ENCODE measurements at regions of chr1 and their contacts with region 1.

Region 1: GRCh38 chr1:30801771-30802198 is 44.2 kb upstream of the LAPTM5 start:
- DNase-seq: peak; percentile 90
- ATAC-seq: peak; percentile 77
- H3K4me3 Mint-ChIP-seq: no peak overlapping the region
- H3K27ac Mint-ChIP-seq: no peak overlapping the region
- H3K4me1 Mint-ChIP-seq: no peaks in the 10 kb centered on the region
- H3K27me3 Mint-ChIP-seq: peaks cover 22% of the 10 kb centered on the region

Region 2: DNA sequence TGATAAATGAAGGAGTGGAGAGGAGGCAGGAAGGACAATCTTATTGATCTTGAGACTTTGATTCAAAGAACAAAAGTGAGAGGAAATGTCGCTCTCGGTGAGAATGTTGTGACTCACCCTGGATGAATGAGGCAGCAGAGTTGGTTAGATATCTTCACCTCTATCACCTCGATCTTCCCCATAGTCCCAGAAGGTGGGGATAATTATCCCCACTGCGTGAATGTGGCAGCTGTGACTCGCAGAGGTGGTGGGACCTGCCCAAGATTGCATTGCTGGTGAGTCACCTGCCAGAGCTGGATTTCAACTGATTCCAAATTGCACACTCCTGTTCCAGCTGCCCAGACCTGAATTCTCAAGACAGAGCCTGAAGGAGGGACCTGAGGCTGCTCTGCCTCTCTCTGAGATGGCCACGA is 183.4 kb before region 1 on chr1:
- CTCF ChIA-PET with region 1: no interaction called
- POLR2A ChIA-PET with region 1: no interaction called
- intact Hi-C with region 1: no loop called
- DNase-seq: peak; percentile 11
- ATAC-seq: peak; percentile 69
- H3K4me3 Mint-ChIP-seq: no peak overlapping the region
- H3K27ac Mint-ChIP-seq: no peak overlapping the region
- H3K4me1 Mint-ChIP-seq: peaks cover 8% of the 10 kb centered on the region
- H3K27me3 Mint-ChIP-seq: peaks cover 24% of the 10 kb centered on the region

Region 3: GRCh38 chr1:30790850-30791778 is 10.7 kb before region 1 on chr1:
- CTCF ChIA-PET with region 1: interaction called, 41 read pairs
- POLR2A ChIA-PET with region 1: no interaction called
- intact Hi-C with region 1: no loop called
- DNase-seq: peak; percentile 26
- ATAC-seq: peak; percentile 64
- H3K4me3 Mint-ChIP-seq: no peak overlapping the region
- H3K27ac Mint-ChIP-seq: no peak overlapping the region
- H3K4me1 Mint-ChIP-seq: peaks cover 12% of the 10 kb centered on the region
- H3K27me3 Mint-ChIP-seq: peaks cover 6% of the 10 kb centered on the region

Region 4: DNA sequence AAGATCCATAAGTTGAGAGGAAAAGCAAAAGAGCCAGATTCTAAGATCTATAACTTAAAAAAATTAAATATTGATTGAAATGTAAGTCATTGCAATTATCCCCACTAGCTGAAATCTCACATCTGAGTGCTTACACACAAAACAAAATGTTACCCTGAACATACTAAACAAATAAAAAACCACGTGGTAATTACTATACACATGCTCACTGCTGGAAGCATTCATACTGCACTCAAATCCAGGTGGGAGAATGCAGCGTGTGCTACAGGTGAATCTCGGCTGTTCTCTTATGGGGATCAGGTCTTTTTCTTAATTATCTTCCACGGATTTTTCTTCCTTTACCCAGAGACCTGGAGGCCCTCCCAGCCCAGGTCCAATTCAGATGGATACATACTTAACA is 32.5 kb after region 1 on chr1:
- CTCF ChIA-PET with region 1: interaction called, 11 read pairs
- POLR2A ChIA-PET with region 1: no interaction called
- intact Hi-C with region 1: no loop called
- DNase-seq: no peak
- ATAC-seq: no peak
- H3K4me3 Mint-ChIP-seq: no peak overlapping the region
- H3K27ac Mint-ChIP-seq: no peak overlapping the region
- H3K4me1 Mint-ChIP-seq: no peaks in the 10 kb centered on the region
- H3K27me3 Mint-ChIP-seq: peaks cover 12% of the 10 kb centered on the region

Region 5: DNA sequence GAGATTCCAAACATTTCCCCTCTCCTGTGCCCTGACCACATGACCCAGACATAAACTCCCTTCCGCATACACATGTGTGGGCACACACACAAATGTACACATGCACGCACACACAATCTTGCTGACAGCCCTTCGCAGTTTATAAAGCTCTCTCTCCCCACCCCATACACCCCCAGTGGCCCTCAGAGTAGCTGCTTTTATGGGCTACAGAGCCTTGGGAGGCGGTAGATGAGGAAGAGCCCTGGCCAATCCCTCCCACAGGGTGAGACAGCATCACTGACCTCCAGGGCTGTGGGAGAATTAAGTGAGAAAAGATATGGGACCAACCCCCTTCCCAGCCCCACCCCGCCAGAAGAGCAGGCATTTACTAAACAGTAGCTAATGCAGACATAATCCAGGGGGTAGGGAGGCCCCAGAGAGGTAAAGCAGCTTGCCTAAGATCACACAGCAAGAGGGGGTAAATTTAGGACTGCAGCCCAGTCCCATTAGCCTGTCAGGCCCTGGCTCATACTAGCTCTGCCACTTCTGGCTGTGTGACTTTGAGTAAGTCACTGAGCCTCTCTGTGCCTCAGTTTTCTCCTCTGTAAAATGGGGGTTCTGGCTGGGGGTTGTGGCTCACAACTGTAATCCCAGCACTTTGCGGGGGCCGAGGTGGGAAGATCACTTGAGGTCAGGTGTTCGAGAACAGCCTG is 101.7 kb after region 1 on chr1:
- CTCF ChIA-PET with region 1: interaction called, 145 read pairs
- POLR2A ChIA-PET with region 1: no interaction called
- intact Hi-C with region 1: no loop called
- DNase-seq: no peak
- ATAC-seq: no peak
- H3K4me3 Mint-ChIP-seq: no peak overlapping the region
- H3K27ac Mint-ChIP-seq: no peak overlapping the region
- H3K4me1 Mint-ChIP-seq: peaks cover 6% of the 10 kb centered on the region
- H3K27me3 Mint-ChIP-seq: peaks cover 18% of the 10 kb centered on the region

Region 6: GRCh38 chr1:30911046-30911954 is 109.5 kb after region 1 on chr1:
- CTCF ChIA-PET with region 1: interaction called, 145 read pairs
- POLR2A ChIA-PET with region 1: no interaction called
- intact Hi-C with region 1: loop called (anchors 1 kb)
- DNase-seq: peak; percentile 82
- ATAC-seq: peak; percentile 74
- H3K4me3 Mint-ChIP-seq: no peak overlapping the region
- H3K27ac Mint-ChIP-seq: no peak overlapping the region
- H3K4me1 Mint-ChIP-seq: peaks cover 13% of the 10 kb centered on the region
- H3K27me3 Mint-ChIP-seq: peaks cover 20% of the 10 kb centered on the region

Region 7: DNA sequence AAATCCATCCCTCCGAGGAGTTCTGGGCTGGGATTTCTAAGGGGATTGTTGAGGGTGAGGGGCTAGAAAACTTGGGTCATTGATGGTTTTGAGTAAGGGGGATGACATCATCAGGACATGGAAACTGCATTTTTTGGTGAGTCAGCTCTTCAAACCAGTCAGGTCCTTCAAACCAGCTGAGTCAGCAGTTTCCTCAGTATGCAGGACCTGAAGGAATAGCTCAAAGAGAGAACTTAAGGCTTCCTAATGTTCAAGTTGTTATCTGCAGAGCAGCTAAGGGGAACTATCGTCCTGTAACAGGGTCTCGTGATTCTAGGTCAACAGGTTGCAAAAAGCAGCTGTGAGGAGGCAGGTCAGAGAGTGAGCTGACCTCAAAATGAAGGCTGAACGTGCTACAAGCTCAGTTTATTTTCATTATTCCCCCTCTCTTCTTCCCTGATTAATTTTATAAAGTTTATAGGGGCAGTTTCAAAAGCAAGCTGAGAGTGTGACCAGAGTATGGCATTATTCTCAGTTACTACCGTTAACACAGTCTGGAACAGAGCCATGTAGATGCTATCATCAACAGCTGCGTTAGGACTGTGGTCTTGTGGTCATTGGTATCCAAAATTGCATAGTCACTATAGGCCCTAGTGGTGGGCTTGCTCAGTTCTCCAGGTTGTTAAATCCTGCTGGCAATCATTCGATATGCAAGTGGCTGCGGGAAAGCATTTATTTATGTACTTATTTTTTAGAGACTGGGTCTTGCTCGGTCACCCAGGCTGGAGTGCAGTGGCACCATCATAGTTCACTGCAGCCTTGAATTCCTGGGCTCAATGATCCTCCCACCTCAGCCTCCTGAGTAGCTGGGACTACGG is 117.5 kb after region 1 on chr1:
- CTCF ChIA-PET with region 1: interaction called, 145 read pairs
- POLR2A ChIA-PET with region 1: interaction called, 3 read pairs
- intact Hi-C with region 1: no loop called
- DNase-seq: no peak
- ATAC-seq: no peak
- H3K4me3 Mint-ChIP-seq: no peak overlapping the region
- H3K27ac Mint-ChIP-seq: no peak overlapping the region
- H3K4me1 Mint-ChIP-seq: no peaks in the 10 kb centered on the region
- H3K27me3 Mint-ChIP-seq: peaks cover 4% of the 10 kb centered on the region

Region 8: DNA sequence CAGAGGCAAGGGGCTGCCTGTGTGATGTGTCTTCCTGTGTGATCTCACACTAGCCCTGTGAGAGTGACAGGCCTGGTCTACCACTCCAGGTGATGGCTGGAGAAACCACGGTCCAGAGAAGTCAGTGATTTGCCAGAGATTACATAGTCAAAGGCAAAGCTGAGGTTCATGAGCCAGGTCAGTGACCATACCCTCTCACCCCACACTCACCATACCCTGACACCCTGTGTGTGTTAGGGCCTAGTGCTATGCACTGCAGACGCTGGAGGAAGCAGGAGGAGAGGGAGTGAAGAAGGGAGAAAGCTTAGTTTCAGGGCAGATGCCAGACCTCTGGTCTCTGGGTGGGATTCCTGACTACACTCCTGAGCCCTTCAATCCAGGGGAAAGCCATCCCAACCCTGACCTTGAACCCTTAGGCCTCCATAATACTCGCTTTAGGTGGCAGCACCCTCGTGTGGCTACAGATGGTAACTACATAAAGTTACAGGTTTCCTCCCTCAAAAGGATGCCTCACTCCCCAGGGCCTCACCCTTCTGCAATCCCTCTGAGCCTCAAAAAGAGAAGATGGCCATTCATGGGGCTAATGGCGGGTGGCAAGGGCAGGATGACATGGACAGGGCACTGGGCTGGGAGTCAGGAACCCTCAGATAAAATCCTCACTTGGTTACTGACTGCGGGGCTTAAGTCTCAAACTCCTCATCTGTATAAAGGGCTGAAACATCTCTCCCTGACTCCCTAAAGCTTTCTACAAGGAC is 127.5 kb after region 1 on chr1:
- CTCF ChIA-PET with region 1: interaction called, 70 read pairs
- POLR2A ChIA-PET with region 1: no interaction called
- intact Hi-C with region 1: loop called (anchors 1 to 5 kb)
- DNase-seq: peak; percentile 75
- ATAC-seq: peak; percentile 82
- H3K4me3 Mint-ChIP-seq: no peak overlapping the region
- H3K27ac Mint-ChIP-seq: no peak overlapping the region
- H3K4me1 Mint-ChIP-seq: no peaks in the 10 kb centered on the region
- H3K27me3 Mint-ChIP-seq: no peaks in the 10 kb centered on the region

Measured in activated CD4-positive, alpha-beta T cell treated with anti-CD3 and anti-CD28 coated beads for 36 hours (primary cell).